ENCODE measurements at regions of chr10 and their contacts with region 1.

Region 1: DNA sequence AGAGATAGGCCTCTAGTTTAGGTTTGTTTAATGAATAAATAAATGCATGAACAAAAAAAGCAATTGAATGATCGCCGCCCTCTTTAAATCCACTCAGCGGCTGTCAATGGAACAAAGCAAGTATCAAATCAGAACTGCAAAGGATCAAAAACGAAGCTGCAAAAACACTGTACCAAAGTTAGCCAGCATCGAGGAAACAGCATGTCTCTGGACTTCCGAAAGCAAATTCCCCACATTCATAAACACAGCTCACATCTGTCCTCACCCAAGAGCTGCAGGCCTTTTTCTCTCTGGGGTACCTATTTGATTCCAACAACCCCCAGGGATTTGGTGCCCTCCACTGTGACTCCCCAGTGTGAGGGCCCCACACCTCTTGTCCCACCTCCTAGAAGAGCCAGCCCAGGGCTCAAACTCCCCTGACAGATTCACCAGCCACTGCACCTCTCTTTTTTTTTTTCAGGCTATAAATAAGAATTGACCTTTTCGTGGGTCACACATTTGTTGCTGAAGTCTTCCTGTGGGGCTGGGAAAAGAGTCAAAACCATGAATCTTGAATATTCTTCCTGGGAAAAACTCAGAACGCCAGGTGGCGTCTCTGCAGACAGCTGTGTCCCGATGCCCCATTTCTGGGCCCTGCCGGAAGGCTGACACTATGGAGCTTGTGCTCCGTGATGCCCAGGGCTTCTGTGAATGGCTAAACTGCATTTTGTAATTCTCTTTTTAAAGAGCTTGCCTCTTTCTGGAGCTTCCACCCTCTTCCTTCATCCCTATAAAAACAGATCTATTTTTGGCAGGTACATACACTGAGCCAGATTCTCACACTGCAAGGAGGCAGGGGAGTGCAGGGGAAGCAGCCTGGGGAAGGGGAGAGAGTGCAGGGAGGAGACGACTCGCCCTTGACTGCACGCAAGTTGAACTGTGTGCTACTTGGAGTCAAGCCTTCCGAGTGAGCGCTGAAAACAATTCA is 51.7 kb downstream of the HSPA12A start:
- DNase-seq: no peak
- ATAC-seq: peak; percentile 54
- H3K4me3 ChIP-seq: no peak overlapping the region
- H3K27ac ChIP-seq: no peak overlapping the region
- H3K4me1 ChIP-seq: no peaks in the 10 kb centered on the region
- H3K27me3 ChIP-seq: no peaks in the 10 kb centered on the region
- CTCF ChIP-seq: peak; percentile 64

Region 2: DNA sequence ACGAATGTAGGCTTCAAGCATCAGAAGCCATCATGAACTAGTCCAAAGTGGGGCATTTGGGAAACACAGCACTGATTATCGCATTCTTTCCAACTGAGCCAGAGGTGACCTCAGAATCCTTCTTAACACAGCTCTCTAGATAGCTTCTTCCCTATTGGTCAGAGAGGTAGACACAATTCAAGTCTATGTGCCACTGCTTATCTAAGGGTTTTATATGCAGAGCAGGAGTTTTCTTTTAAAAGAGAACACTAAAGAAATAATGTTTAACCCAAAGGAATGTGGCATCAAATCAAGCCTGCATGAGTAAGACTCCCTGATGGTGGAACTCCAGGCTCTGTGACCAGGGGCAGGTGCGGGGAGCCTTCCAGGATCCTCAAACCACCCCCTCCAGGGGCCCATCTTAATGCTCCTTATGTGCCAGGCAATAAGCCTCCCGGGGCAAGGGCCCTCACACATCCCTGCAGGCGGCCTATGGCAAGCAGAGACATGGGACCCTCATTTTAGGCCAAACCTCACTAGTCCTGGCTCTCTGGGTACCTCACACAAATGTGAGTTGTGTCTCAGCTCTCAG is 38.0 kb after region 1 on chr10:
- CTCF ChIA-PET with region 1: no interaction called
- POLR2A ChIA-PET with region 1: no interaction called
- in situ Hi-C with region 1: no loop called
- intact Hi-C with region 1: no loop called
- DNase-seq: no peak
- ATAC-seq: no peak
- H3K4me3 ChIP-seq: no peak overlapping the region
- H3K27ac ChIP-seq: no peak overlapping the region
- H3K4me1 ChIP-seq: no peaks in the 10 kb centered on the region
- H3K27me3 ChIP-seq: no peaks in the 10 kb centered on the region
- CTCF ChIP-seq: no peak

Region 3: DNA sequence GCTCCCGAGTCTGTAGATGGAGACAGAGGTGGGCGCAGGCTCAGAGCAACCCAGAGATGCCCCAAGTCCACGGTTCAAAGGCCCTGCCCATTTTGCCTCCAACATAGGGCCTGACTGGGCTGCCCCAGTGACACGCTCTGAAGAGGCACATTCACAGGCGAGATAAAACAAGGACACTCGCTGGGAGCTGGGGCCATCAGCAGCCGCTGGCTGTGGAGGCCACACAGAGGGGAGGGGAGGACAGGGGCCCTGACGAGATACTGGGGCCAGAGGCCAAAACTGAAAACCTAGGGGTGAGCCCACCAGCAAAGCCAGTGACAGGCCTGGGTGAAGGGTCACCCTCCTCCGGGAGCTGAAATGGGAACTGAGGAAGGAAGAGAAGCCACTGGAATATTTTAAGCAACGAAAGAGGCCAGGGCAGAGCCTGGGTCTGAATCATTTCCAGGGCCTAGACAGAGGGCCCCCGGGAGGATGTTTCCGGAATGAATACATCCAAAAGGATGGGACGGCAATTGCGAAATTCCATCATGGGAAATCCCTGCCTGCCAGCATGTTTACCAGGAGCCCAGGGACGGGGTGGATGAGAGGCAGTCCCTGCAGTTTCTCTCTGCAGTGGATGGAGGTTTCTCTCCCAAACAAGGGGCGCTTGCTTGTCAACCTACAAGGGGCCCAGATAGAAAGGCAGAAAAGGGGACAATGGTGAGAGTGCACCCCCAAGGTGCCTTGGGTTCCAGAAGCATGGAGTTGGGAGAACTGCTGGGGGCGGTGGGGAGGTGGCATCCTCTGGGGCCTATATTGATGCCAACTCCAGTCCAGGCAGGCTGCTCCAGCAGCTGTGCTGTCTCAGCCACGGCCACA is 80.7 kb after region 1 on chr10:
- CTCF ChIA-PET with region 1: no interaction called
- POLR2A ChIA-PET with region 1: no interaction called
- in situ Hi-C with region 1: loop called (anchors 10 kb)
- intact Hi-C with region 1: no loop called
- DNase-seq: no peak
- ATAC-seq: no peak
- H3K4me3 ChIP-seq: no peak overlapping the region
- H3K27ac ChIP-seq: no peak overlapping the region
- H3K4me1 ChIP-seq: no peaks in the 10 kb centered on the region
- H3K27me3 ChIP-seq: no peaks in the 10 kb centered on the region
- CTCF ChIP-seq: no peak

Region 4: DNA sequence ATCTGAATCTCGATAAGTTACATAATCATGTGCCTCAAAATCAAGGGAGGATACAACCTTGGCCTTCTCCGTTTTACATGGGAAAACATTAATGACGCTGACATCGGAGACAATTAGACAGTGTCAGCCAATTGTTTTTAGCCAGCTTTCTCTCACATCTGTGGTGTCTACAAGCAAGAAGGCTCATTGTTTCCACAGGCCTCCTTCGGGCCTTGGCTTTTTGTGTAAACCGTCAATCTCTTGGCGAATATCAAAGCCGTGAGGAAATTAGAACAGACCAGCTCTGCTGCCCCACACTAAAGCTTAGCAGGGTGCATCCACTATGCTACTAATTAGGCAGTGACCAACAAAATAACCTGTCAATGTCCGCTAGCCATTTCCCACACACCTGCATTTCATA is 404.2 kb after region 1 on chr10:
- CTCF ChIA-PET with region 1: no interaction called
- POLR2A ChIA-PET with region 1: no interaction called
- in situ Hi-C with region 1: no loop called
- intact Hi-C with region 1: no loop called
- DNase-seq: no peak
- ATAC-seq: no peak
- H3K4me3 ChIP-seq: no peak overlapping the region
- H3K27ac ChIP-seq: no peak overlapping the region
- H3K4me1 ChIP-seq: no peaks in the 10 kb centered on the region
- H3K27me3 ChIP-seq: peaks cover 7% of the 10 kb centered on the region
- CTCF ChIP-seq: no peak